GM10248 (cell line): ENCODE measurements at regions of chr2 and their contacts with region 1.

Region 1: DNA sequence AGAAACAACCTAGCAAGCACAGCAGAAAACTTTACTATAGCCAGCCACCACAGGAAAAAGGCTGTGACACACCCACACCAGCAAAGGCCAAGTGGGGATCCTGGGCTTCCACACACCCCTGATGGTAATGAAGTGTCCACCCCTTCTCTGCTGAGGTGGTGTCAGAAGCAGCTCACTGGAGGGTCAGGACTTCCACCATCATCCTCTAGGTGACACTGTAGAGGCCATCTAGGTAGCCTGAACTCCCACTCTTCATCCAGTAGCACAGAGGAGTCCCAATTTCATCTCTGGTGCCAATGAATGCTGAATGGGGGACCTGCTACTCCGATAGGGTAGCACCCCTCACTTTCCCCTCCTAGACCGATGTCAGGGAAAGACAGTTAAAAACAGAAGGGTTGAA is 1544.4 kb downstream of the LRP1B start:
- DNase-seq: peak; percentile 30
- CTCF ChIP-seq: peak; percentile 64

Region 2: GRCh38 chr2:140454717-140455116 is 131.7 kb before region 1 on chr2:
- CTCF ChIA-PET with region 1: no interaction called
- POLR2A ChIA-PET with region 1: no interaction called
- DNase-seq: no peak
- CTCF ChIP-seq: no peak

Region 3: DNA sequence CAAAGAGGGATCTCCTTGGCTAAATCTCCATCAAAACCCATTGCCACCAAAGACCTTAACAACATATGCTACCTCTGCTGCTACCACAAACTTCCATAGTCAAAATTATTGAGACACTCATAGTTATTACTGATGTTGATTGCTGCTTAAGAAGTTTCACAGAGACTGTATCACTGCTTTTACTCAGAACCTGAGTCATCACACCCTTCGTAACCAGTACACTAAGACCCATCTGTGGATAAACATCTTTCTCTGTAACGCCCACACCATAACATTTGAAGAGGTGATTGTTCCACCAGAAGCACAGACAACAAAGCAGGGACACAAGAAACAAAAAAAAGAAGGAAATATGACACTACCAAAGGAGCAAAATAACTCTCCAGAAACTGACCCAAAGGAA is 18.6 kb before region 1 on chr2:
- CTCF ChIA-PET with region 1: interaction called, 13 read pairs
- POLR2A ChIA-PET with region 1: no interaction called
- DNase-seq: no peak
- CTCF ChIP-seq: no peak

Region 4: DNA sequence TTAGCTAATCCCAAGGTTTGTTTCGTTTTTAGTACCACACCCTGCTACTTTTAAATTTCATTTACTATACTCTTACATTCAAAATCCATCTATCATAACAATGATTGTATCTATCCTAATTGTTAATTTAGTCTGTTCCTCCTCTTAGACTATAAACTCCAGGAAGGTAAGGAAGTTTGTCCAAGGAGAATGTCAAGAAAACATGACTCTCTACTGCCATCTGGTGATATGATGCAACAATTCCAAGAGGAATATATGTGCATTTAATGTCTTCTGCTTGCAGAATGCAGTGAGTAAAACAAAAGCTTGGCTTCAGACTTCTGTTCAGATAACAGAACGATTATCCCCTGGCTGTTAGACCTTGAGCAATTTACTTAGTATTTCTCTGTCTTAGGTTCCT is 277.3 kb after region 1 on chr2:
- CTCF ChIA-PET with region 1: interaction called, 28 read pairs
- POLR2A ChIA-PET with region 1: no interaction called
- DNase-seq: peak; percentile 13
- CTCF ChIP-seq: peak; percentile 63